ENCODE measurements at regions of chr3 and their contacts with region 1.

Region 1: GRCh38 chr3:184583578-184584425 is 22.2 kb downstream of the EPHB3 start:
- DNase-seq: peak; percentile 64
- ATAC-seq: peak; percentile 51
- H3K4me3 Mint-ChIP-seq: peak overlapping the region; percentile 65
- H3K27ac Mint-ChIP-seq: no peak overlapping the region
- H3K4me1 Mint-ChIP-seq: peaks cover 25% of the 10 kb centered on the region
- H3K27me3 Mint-ChIP-seq: peaks cover 40% of the 10 kb centered on the region
- CTCF ChIP-seq: no peak

Region 2: DNA sequence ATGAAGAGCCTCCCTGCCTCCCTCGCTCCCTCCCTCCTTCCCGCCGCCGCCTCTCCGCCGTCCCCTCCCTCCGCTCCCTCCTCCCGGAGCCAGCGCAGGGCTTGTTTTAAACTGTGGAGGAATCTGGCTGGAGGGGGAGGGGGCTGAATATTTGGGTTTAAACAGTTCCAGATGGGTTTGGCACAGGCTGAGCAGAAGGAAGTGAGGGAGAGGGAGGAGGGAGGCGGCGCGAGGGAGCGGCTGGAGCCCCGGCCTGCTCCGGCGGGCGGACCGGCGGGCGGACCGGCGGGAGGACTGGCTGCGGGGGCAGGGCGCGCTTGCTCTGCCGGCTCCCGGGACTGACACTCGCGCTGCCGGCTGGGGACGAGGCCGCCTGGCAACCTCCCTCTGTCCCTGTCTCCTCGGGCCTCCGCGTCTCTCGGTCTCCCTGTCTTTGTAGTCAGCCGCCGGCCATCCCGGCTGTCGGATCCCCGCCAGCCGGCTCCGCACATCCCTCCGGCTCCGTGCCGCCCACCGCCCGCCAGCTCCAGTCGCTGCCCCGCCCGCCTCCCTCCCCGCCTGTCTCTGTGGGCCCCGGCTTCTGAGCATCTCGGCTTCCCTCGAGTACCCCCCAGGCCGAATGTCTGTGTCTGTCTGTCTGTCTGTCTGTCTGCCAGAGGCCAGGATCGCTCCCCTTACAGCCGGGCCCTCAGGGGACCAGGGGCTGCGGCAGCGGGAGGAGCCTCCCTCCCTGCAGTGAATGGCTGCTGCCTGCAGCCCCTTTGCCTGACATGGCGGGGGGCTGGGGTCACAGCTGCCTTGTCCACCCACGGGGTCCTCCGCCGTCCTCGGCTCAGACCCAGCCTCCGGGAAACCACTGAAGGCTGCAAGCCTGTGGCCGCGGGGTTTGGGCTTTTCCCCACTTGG is 14.6 kb before region 1 on chr3:
- CTCF ChIA-PET with region 1: interaction called, 27 read pairs
- POLR2A ChIA-PET with region 1: interaction called, 3 read pairs
- DNase-seq: peak; percentile 65
- ATAC-seq: peak; percentile 26
- H3K4me3 Mint-ChIP-seq: peak overlapping the region; percentile 75
- H3K27ac Mint-ChIP-seq: no peak overlapping the region
- H3K4me1 Mint-ChIP-seq: peaks cover 63% of the 10 kb centered on the region
- H3K27me3 Mint-ChIP-seq: peaks cover 96% of the 10 kb centered on the region
- CTCF ChIP-seq: no peak

Region 3: DNA sequence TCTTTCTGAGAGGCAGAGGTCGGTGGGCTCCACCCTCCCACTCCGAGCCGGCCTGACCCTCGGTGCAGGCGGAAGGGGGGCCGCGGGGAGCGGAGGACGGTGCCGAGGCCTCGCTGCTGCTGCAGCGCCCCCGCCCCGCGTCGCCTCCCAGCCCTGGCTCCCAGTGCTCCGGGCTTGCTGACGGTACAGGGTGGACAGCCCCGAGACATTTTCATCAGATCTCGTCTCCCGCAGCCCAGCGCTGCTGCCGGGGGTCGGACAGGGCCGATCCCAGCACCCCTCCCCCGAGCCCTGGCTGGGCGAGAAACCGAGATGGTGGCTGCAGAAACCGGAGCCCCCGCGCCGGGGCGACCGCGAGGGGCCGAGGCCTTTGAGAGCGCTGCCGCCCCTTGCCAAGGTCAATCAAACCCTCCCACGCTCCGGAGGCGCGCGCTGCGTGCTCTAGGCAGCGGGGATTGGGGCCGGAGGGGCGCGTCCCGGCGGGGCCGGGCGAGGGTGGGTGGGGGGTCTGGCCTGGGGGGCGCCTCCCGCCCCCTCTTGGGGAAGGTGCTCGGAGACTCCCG is 20.3 kb after region 1 on chr3:
- CTCF ChIA-PET with region 1: interaction called, 37 read pairs
- POLR2A ChIA-PET with region 1: interaction called, 3 read pairs
- DNase-seq: peak; percentile 55
- ATAC-seq: peak; percentile 27
- H3K4me3 Mint-ChIP-seq: peak overlapping the region; percentile 71
- H3K27ac Mint-ChIP-seq: no peak overlapping the region
- H3K4me1 Mint-ChIP-seq: peaks cover 37% of the 10 kb centered on the region
- H3K27me3 Mint-ChIP-seq: peaks cover 92% of the 10 kb centered on the region
- CTCF ChIP-seq: no peak

Region 4: DNA sequence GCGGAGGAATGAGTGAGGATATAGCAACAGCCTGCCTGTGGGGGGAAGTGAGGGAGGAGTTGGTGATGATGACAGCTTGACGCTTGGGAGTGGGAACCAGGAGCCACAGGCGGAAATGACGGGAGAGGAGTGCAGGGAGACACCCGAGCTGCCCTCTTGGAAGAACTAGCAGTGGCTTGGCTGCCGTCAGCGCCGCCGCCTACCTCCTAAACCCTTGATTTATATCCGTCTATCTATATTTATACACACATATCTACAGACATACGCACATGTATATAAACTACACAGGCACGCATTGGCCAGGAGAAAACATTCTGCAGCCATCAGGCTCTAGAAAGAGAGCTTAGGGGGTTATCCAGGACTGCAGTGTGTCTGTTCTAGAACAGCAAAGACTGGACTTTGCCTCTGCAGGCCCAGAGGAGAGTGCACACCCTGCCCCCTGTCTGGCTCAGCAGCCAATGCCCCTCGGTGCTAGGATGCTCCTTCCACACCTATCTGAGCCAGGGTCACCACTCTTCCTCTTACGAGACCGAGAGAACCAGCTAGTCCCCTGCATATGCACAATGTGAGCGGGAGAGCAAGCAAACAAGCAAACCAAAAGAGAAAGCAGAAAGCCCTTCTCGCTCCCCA is 173.3 kb after region 1 on chr3:
- CTCF ChIA-PET with region 1: interaction called, 14 read pairs
- POLR2A ChIA-PET with region 1: interaction called, 3 read pairs
- DNase-seq: no peak
- ATAC-seq: peak; percentile 24
- H3K4me3 Mint-ChIP-seq: no peak overlapping the region
- H3K27ac Mint-ChIP-seq: peak overlapping the region; percentile 85
- H3K4me1 Mint-ChIP-seq: peaks cover 54% of the 10 kb centered on the region
- H3K27me3 Mint-ChIP-seq: no peaks in the 10 kb centered on the region
- CTCF ChIP-seq: no peak

Region 5: GRCh38 chr3:184864000-184864399 is 280.2 kb after region 1 on chr3:
- CTCF ChIA-PET with region 1: no interaction called
- POLR2A ChIA-PET with region 1: no interaction called
- DNase-seq: no peak
- ATAC-seq: no peak
- H3K4me3 Mint-ChIP-seq: no peak overlapping the region
- H3K27ac Mint-ChIP-seq: no peak overlapping the region
- H3K4me1 Mint-ChIP-seq: no peaks in the 10 kb centered on the region
- H3K27me3 Mint-ChIP-seq: no peaks in the 10 kb centered on the region
- CTCF ChIP-seq: no peak